ENCODE measurements at regions of chr15 and their contacts with region 1.

Region 1: DNA sequence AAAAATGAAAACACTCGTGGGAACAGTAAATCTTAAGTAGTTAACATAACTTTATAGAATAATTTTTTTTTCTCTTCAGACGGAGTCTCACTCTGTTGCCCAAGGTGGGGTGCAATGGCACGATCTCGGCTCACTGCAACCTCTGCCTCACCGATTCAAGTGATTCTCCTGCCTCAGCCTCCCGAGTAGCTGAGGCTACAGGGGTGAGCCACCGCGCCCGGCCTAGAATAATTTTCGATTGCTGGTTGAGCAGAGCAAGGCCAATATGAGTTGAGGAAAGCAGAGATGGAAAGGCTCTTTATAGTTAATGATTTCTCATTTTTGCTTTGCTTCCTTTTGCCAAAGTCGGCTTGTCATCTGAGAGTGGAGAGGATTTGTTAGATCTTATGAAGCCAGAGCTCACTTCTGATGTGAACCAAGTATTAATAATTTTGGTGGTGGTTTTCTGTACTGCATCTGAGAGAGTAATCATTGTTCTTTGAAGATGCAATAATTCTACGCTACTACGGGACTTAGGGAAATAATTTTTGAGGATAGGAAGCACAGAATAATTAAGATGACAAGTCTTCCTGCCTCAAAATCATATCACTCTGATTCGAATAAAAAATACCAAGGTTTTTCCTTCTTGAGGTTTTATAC is 1.6 kb upstream of the GOLM2 start:
- DNase-seq: peak in 18 of 42 donors; percentile 3 to 47 (median 14)

Region 2: GRCh38 chr15:44426975-44427755 is 140.2 kb after region 1 on chr15 and contains the start of gene CTDSPL2:
- intact Hi-C with region 1: loop called (anchors 2 kb)
- DNase-seq: peak; percentile 94 to 99 (median 98)

Region 3: DNA sequence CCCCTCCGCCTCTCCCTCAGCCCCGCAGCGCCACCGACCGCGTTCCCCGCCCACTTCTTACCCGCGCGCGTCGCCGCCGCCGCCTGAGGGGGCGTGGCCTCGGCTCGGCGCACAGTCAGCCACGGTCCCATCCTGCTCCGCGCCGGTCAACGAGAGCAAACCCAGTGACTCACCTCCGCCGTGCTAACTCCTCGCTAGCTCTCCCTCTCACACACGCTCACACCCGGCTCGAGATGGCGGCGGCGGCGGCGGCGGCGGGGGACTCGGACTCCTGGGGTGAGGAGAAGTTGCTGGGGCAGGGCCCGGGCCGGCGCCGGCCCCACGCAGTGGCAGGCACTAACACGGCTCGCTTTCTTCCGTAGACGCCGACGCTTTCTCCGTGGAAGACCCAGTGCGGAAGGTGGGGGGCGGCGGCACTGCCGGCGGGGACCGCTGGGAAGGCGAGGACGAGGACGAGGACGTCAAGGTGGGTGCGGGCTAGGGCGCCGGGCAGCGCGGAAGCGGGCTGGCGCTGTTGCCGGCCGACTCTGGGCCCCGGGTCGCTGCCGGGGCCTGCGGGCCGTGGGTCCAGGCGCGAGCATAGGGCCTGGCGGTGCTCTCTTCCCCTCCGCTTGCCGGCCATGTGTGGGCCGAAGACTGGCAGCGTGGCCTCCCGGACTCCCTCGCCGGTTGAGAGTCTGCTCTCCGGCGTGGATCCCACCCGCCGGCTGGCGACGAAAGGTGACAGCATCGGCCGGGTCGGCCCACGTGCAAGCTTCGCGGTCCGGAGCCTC is 250.2 kb after region 1 on chr15 and contains the start of gene EIF3J:
- intact Hi-C with region 1: loop called (anchors 5 kb)
- DNase-seq: peak; percentile 86 to 98 (median 95)

Measured in head of caudate nucleus (tissue), 42 donors.